HEK293 (cell line): ENCODE measurements at regions of chr10 and their contacts with region 1.

Region 1: DNA sequence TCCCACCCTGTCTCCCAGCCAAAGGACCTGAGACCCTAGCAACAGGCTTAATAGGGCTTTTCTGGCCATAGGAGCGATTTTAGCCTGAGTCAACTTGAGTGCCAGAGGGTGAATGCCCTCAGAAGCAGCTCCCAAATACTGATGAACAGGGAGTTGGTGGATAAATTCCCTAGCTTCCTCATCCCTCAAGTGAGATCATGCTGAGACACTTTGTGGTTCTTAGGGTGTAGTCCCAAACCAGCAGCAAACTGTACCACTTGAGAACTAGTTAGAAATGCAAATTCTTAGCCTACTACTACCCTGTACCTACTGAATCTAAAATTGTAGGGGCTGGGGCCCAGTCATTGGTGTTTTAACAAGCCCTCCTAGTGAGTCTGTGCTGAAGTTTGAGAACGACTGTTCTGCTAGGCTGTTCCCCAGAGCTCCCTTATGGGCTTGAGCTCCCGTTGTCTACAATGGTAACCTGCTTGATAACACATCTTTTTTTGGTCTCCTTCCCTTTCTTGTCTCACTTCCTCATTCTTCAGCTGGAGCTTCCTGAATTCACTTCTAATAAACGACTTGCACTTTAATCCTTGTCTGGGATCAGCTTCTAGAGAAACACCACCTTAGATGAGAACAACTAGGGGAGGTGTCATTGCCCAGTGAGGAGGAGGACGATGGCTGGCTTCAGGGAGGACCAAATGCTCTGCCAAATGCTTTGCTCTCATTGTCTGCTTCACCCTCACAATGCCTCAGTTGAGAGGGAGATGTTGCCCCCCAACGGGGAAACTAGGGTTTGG is 18.2 kb upstream of the CDH23 start:
- H3K4me3 ChIP-seq: no peak overlapping the region
- H3K27ac ChIP-seq: no peak overlapping the region
- H3K4me1 ChIP-seq: 0 out of 2 replicates have a peak, but pooled peaks cover 2% of the 10 kb centered on the region
- CTCF ChIP-seq: no peak

Region 2: GRCh38 chr10:70874045-70874444 is 504.5 kb before region 1 on chr10:
- CTCF ChIA-PET with region 1: no interaction called
- POLR2A ChIA-PET with region 1: no interaction called
- H3K4me3 ChIP-seq: no peak overlapping the region
- H3K27ac ChIP-seq: no peak overlapping the region
- H3K4me1 ChIP-seq: no peaks in the 10 kb centered on the region
- CTCF ChIP-seq: no peak

Region 3: DNA sequence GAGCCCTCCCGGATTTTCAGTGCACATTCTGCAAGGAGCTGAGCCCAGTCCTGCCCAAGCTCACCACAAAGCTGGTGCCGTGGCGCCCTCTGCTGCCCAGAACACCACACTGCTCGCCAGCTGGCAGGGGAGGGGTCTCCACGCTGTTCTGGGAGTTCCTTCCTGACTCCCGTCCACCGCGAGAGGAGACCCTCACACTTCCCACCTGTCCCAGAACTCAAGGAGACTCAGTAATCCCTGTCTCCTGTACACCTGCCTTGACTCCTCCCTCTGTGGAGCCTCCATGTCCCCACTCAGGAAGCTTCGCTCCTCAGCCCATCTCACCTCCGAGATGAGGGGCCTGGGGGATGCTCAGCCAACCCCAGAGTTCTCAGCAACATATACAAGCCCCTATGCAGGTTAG is 329.8 kb after region 1 on chr10:
- CTCF ChIA-PET with region 1: interaction called, 24 read pairs
- POLR2A ChIA-PET with region 1: no interaction called
- H3K4me3 ChIP-seq: no peak overlapping the region
- H3K27ac ChIP-seq: no peak overlapping the region
- H3K4me1 ChIP-seq: no peaks in the 10 kb centered on the region
- CTCF ChIP-seq: peak; percentile 78